Activated CD4-positive, alpha-beta memory T cell treated with anti-CD3 and anti-CD28 coated beads, Interleukin-2, amount 10 ng/mL, durations not matched to agents 7 days and 5 days (primary cell): ENCODE measurements at regions of chr6 and their contacts with region 1.

Region 1: DNA sequence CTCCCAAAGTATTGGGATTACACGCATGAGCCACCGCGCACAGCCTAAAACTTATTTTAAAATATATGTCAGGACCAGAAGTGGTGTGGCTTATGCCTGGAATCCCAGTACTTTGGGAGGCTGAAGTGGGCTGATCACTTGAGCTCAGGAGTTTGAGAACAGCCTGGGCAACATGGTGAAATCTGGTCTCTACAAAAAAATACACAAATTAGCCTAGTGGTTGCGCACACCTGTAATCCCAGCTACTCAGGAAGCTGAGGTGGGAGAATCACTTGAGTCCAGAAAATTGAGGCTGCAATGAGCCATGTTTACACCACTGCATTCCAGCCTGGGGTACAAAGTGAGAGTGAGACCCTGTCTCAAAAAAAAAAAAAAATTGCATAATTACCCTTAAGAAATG is 13.7 kb downstream of the PXT1 start:
- DNase-seq: no peak
- H3K4me3 Mint-ChIP-seq: no peak overlapping the region
- H3K27ac Mint-ChIP-seq: no peak overlapping the region
- H3K4me1 Mint-ChIP-seq: peaks cover 10% of the 10 kb centered on the region
- H3K27me3 Mint-ChIP-seq: no peaks in the 10 kb centered on the region

Region 2: DNA sequence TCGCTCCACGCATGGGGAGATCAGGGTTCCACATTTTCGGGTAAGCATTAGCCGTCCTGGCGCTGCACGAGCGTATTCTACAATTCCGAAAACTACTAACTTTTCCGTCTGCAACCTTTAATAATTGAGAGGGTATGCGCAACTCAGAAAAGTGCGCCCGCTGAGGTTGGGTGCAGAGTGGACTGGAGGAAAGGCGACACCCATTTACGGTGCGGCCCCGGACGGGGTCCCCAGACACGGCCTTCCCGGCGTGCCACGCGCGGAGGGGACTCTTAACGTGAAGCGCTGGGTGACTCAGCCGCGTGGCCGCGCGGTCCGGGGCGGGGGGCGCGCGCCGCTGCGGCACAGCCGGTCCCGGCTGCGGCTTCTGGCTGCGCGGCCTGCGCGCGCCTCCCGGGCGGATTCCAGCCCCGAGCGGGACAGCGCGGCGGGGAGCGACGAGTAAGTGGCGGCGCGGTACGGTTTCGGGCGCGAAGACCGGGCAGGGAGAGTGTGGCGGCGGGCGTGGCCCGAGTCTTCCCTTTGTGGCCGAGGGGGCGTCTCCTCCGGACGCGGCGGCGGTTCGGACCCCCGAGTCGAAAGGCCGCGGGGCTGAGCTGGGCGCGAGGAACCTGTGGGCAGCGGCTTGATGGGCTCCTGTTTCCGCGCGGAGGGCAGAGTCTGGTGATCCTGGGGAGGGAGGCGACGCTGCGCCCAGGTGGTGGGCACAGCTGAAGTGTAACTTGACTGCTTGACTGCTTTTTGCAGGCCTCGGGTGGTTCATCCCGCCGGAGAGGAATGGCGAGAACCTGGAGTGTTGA is 14.0 kb after region 1 on chr6 and contains the starts of genes KCTD20 and PXT1:
- CTCF ChIA-PET with region 1: interaction called, 15 read pairs
- POLR2A ChIA-PET with region 1: interaction called, 19 read pairs
- DNase-seq: peak; percentile 90
- H3K4me3 Mint-ChIP-seq: peak within 1 kb of the TSS; percentile 97
- H3K27ac Mint-ChIP-seq: peak within 1 kb of the TSS; percentile 97
- H3K4me1 Mint-ChIP-seq: peaks cover 39% of the 10 kb centered on the region
- H3K27me3 Mint-ChIP-seq: no peaks in the 10 kb centered on the region
- total RNA-seq, gene KCTD20: 60.7 to 63.6 TPM
- total RNA-seq, gene PXT1: 0.35 TPM in 1 of 2 experiments, not detected in the other

Region 3: GRCh38 chr6:36459501-36459900 is 30.6 kb after region 1 on chr6:
- CTCF ChIA-PET with region 1: no interaction called
- POLR2A ChIA-PET with region 1: no interaction called
- DNase-seq: no peak
- H3K4me3 Mint-ChIP-seq: no peak overlapping the region
- H3K27ac Mint-ChIP-seq: no peak overlapping the region
- H3K4me1 Mint-ChIP-seq: peaks cover 2% of the 10 kb centered on the region
- H3K27me3 Mint-ChIP-seq: no peaks in the 10 kb centered on the region

Region 4: GRCh38 chr6:36578431-36578830 is 149.5 kb after region 1 on chr6:
- CTCF ChIA-PET with region 1: interaction called, 26 read pairs
- POLR2A ChIA-PET with region 1: no interaction called
- DNase-seq: no peak
- H3K4me3 Mint-ChIP-seq: no peak overlapping the region
- H3K27ac Mint-ChIP-seq: no peak overlapping the region
- H3K4me1 Mint-ChIP-seq: peaks cover 11% of the 10 kb centered on the region
- H3K27me3 Mint-ChIP-seq: no peaks in the 10 kb centered on the region